Mammary epithelial cell (primary cell): ENCODE measurements at regions of chrX and their contacts with region 1.

Region 1: DNA sequence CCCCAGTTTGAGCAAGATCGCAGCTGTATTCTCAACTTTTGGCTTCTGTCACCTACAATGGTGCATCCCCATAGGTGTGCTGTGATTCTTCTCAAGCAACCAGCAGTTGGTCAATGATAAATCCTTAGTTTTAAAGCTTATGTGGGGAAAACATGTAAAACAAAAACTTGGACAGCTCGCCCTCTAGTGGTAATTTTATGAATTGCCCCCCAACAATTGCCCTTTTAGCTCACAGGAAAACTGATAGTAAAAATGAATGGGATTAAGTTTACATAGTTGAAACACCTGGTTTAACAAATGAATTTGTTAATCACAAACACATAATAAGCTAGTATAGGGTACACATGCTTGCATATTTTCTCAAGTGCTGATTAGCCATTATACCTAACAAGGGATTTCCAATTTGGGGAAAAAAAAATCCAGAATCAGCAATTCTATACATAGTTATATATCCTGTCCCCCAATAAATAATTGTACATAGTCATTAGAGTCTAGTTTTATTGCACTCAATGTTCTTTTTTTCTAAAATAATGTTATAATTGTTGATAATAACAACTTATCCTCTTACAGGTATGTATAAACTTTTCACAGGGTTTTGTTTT is 30.1 kb downstream of the TEX13A start:
- DNase-seq: peak; percentile 22
- H3K4me3 ChIP-seq: no peak overlapping the region
- H3K27ac ChIP-seq: no peak overlapping the region
- H3K4me1 ChIP-seq: no peaks in the 10 kb centered on the region
- H3K27me3 ChIP-seq: peaks cover 3% of the 10 kb centered on the region
- CTCF ChIP-seq: peak; percentile 78 to 93

Region 2: DNA sequence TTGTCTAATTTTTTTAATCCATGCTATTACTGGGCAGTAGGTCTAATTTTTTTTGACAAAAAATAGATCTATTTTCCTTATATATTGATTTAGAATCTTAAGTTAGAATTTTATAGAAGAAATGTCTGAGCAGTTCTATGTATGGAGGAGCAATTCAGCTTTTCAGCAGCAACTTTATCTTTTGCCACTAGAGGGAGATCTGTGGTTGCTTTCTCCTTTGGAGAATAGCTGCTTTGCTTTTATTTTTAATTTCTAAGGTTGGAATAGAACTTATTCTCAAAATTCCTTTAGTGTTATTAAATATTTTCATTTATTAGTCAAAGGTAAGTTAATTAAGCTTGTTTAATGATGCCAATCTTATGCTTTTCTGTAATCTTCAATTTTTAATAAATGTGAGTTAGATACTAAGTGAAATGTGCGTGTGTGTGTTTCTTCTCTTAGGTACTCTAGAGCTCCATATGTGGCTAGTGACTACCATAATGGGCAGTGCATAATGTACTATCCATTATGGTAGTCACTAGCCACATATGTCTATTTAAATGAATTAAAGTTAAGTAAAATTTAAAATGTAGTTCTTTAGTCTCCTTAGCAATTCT is 994.8 kb before region 1 on chrX:
- CTCF ChIA-PET with region 1: interaction called, 3 read pairs
- dilution Hi-C with region 1: no loop called
- in situ Hi-C with region 1: no loop called
- intact Hi-C with region 1: loop called (anchors 2 kb)
- DNase-seq: peak; percentile 22
- H3K4me3 ChIP-seq: no peak overlapping the region
- H3K27ac ChIP-seq: no peak overlapping the region
- H3K4me1 ChIP-seq: peaks cover 7% of the 10 kb centered on the region
- H3K27me3 ChIP-seq: no peaks in the 10 kb centered on the region
- CTCF ChIP-seq: peak; percentile 79 to 93

Region 3: DNA sequence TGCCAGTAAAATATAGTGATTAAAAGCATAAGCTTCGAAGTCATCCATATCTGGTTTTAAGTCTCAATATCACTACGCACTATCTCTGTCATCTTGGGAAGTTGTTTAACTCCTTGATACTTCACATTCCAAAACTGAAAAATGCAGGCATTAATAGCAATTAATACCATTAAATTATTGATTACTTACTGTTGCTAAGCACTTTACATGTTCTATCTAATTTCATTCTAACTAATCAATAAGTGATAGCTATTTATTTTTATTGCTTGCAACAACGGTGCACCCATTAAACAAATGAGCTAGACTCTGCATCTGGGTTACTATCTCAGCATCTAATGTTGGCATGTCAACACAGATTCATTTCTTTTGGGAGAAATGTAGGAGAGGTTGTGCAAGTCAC is 692.1 kb before region 1 on chrX:
- CTCF ChIA-PET with region 1: no interaction called
- dilution Hi-C with region 1: no loop called
- in situ Hi-C with region 1: no loop called
- intact Hi-C with region 1: no loop called
- DNase-seq: no peak
- H3K4me3 ChIP-seq: no peak overlapping the region
- H3K27ac ChIP-seq: no peak overlapping the region
- H3K4me1 ChIP-seq: no peaks in the 10 kb centered on the region
- H3K27me3 ChIP-seq: no peaks in the 10 kb centered on the region
- CTCF ChIP-seq: no peak

Region 4: GRCh38 chrX:104913348-104913747 is 277.0 kb before region 1 on chrX:
- CTCF ChIA-PET with region 1: no interaction called
- dilution Hi-C with region 1: no loop called
- in situ Hi-C with region 1: no loop called
- intact Hi-C with region 1: loop called (anchors 2 kb)
- DNase-seq: no peak
- H3K4me3 ChIP-seq: no peak overlapping the region
- H3K27ac ChIP-seq: no peak overlapping the region
- H3K4me1 ChIP-seq: no peaks in the 10 kb centered on the region
- H3K27me3 ChIP-seq: no peaks in the 10 kb centered on the region
- CTCF ChIP-seq: peak; percentile 58 to 75

Region 5: DNA sequence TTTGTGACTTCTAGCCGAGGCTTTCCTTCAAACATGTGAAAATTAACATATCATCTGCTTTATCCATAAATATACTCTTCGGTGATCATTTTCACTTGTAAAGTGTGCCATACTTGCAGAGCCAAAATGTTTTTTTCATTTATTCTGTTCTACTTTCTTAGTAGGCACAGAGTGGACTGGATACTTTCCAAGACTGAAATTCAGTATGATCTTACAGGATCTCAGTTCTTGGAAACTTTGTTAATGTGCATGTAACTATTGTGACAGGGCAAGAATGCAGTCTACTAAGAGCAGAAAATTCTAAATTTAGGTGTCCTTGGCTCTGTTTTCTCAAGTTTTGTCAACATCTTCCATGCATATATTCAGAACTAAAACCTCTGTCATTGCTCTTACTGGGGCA is 254.8 kb before region 1 on chrX:
- CTCF ChIA-PET with region 1: no interaction called
- dilution Hi-C with region 1: no loop called
- in situ Hi-C with region 1: loop called in 1 of 2 experiments (anchors 25 kb)
- intact Hi-C with region 1: no loop called
- DNase-seq: no peak
- H3K4me3 ChIP-seq: no peak overlapping the region
- H3K27ac ChIP-seq: no peak overlapping the region
- H3K4me1 ChIP-seq: no peaks in the 10 kb centered on the region
- H3K27me3 ChIP-seq: peaks cover 7% of the 10 kb centered on the region
- CTCF ChIP-seq: no peak

Region 6: DNA sequence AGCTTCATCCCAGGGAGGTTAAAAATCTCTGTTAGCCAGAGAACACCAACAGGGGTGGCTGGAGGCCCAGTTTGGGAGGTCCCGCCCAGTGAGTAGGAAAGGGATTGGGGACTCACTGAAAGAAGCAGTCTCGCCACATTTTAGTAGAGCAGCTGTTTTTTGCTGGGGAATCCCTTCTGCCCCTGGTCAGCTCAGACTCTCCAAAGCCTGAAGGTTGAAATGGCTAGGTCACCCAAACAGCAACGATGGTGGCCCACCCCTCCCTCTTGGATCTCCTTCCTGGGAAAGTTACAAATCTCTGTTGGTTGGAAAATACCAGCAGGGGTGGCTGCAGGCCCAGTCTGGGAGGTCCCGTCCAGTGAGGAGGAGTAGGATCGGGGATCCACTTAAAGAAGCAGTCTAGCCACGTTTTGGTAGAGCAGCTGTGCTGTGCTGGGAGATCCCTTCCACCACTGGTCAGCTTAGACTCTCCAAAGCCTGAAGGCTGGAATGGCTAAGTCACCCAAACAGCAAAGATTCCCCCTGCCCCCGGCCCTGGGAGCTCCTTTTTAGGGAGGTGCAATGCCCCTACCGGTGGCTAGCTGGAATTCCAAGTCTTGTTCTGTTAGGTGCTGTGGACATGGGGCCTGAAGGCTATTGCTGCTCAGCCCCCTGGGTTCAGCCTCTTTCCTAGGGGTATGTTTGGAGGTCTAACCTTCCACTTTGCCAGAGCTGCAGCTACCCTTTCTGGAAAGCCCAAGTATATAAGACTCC is 70.1 kb after region 1 on chrX:
- CTCF ChIA-PET with region 1: no interaction called
- dilution Hi-C with region 1: no loop called
- in situ Hi-C with region 1: no loop called
- intact Hi-C with region 1: no loop called
- DNase-seq: no peak
- H3K4me3 ChIP-seq: no peak overlapping the region
- H3K27ac ChIP-seq: no peak overlapping the region
- H3K4me1 ChIP-seq: no peaks in the 10 kb centered on the region
- H3K27me3 ChIP-seq: peaks cover 3% of the 10 kb centered on the region
- CTCF ChIP-seq: peak; percentile 2 to 13

Region 7: GRCh38 chrX:105701084-105702055 is 511.0 kb after region 1 on chrX:
- CTCF ChIA-PET with region 1: interaction called, 5 read pairs
- dilution Hi-C with region 1: no loop called
- in situ Hi-C with region 1: no loop called
- intact Hi-C with region 1: loop called (anchors 5 kb)
- DNase-seq: peak; percentile 21
- H3K4me3 ChIP-seq: no peak overlapping the region
- H3K27ac ChIP-seq: no peak overlapping the region
- H3K4me1 ChIP-seq: peaks cover 7% of the 10 kb centered on the region
- H3K27me3 ChIP-seq: no peaks in the 10 kb centered on the region
- CTCF ChIP-seq: peak; percentile 13 to 44